Activated CD4-positive, alpha-beta memory T cell treated with anti-CD3 and anti-CD28 coated beads for 36 hours (primary cell): ENCODE measurements at regions of chr12 and their contacts with region 1.

Region 1: DNA sequence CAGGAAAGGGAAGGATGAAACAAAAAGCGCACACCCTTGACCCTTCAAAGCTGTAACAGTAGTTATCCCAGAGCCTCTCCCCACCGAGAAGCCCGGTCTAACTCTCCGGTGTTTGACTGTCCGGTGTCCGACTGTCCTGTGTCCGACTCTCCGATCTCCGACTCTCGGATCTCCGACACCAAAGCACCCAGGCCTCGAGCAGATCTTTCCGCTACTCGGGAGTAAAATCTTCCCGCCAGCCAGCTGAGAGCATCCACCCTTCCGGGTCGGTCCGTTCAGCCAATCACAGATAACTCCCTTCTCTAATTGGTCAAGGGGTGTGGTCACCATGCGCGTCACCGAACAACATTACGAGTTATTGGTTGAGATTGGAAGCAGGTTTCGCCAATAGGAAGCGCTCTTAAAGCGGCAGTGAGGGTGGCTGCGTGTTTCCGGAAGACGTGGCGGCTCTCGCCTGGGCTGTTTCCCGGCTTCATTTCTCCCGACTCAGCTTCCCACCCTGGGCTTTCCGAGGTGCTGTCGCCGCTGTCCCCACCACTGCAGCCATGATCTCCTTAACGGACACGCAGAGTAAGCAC is at the starts of genes GOLT1B and RECQL:
- DNase-seq: peak; percentile 95
- H3K4me3 Mint-ChIP-seq: no peak within 1 kb of the TSS
- H3K27ac Mint-ChIP-seq: no peak within 1 kb of the TSS
- H3K4me1 Mint-ChIP-seq: peaks cover 58% of the 10 kb centered on the region
- H3K27me3 Mint-ChIP-seq: no peaks in the 10 kb centered on the region
- total RNA-seq, gene GOLT1B: 43.6 to 45.2 TPM
- total RNA-seq, gene RECQL: 112 to 114 TPM

Region 2: DNA sequence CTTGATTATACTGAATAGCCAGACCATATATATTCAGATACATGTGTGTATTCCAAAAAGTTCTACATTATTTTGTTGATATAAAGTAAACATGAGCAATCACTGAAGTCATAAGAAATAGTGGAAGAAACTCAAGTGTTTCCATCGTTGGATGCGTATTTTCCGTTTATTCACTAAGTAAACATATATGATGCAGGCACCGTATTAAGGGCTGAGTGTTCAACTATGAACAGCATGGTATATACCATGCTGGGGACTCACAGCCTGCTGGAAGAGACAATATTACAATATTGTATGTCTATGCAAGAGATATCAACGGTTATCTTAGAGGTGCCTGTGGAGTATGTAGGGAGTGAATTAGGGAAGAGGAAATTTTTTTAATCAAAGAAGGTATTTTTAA is 62.8 kb before region 1 on chr12:
- CTCF ChIA-PET with region 1: no interaction called
- POLR2A ChIA-PET with region 1: interaction called, 16 read pairs
- intact Hi-C with region 1: loop called (anchors 1 kb)
- DNase-seq: no peak
- H3K4me3 Mint-ChIP-seq: peak overlapping the region; percentile 93
- H3K27ac Mint-ChIP-seq: peak overlapping the region; percentile 96
- H3K4me1 Mint-ChIP-seq: peaks cover 39% of the 10 kb centered on the region
- H3K27me3 Mint-ChIP-seq: no peaks in the 10 kb centered on the region

Region 3: DNA sequence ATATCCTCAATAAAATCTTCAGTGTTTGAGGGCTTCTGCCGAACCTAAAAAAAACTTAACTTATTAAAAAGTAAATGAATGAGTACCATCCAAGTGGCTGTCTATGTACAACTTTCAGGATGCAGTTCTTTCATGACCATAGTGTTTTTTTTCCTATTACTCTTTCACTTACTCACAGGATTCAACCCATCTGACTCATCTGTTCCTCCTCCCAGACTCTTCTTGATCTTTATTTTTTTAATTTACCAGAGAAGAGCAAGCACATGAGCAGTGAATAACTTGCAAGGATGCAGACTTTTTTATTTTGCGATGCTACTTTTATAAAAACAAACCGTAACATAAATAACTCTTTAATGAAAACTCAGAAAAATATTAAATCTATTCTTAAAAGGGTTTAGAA is 24.5 kb before region 1 on chr12:
- CTCF ChIA-PET with region 1: no interaction called
- POLR2A ChIA-PET with region 1: interaction called, 3 read pairs
- intact Hi-C with region 1: loop called (anchors 1 kb)
- DNase-seq: no peak
- H3K4me3 Mint-ChIP-seq: no peak overlapping the region
- H3K27ac Mint-ChIP-seq: peak overlapping the region; percentile 73
- H3K4me1 Mint-ChIP-seq: peaks cover 14% of the 10 kb centered on the region
- H3K27me3 Mint-ChIP-seq: no peaks in the 10 kb centered on the region

Region 4: DNA sequence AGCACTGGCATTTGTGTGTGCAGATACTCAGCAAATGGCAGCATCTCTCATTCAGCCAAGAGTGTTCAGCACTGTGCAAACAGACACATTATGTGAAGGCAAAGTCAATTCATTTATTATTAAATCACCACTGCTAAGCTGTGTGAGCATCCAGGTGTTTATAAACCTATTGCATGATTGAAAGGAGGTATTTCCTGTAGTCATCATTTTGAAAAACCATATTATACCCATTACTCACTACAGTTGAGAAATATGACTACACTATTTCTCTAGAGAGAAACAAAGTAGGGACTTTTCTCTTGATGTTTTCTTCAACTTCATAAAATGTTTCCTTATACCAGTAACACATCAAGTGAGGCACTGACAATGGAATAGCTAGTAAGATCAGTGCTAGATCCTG is 38.3 kb after region 1 on chr12:
- CTCF ChIA-PET with region 1: no interaction called
- POLR2A ChIA-PET with region 1: no interaction called
- intact Hi-C with region 1: loop called (anchors 1 kb)
- DNase-seq: no peak
- H3K4me3 Mint-ChIP-seq: no peak overlapping the region
- H3K27ac Mint-ChIP-seq: no peak overlapping the region
- H3K4me1 Mint-ChIP-seq: peaks cover 10% of the 10 kb centered on the region
- H3K27me3 Mint-ChIP-seq: peaks cover 2% of the 10 kb centered on the region

Region 5: DNA sequence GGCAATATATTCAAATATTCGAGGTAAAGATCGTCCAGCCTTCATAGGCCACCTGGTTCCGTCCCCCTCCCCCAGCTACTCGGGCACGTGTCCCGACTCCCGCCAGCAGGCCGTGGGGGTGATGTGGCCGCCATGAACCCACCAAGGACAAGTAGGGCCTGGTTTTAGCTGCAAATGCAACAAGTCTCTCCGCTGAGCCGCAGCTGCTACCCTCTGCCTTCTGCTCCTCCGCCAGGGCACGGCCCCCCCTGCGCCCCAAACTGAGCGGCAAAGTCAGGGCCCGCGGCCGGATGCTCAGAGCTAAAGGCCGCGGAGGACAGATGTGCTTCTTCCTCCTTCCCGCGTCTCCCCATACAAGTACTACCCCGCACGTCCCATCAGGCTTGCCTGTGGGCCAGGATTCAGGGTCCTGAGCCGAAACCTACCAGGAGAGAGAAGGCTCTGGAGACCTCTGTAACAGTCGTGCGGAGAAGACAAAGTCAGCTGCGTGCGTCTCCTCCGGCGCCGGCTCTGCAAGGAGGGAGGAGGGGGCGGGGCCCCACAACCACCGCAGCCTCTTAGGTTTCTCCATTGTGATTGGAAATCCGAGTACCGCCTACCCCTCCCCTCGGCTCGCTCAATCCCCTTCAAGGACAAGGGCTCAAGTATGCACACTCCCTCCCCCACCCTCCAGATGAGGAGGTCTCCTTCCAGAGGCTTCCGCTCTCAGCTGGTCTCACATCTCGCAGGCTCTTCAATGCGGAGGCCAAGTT is 156.0 kb after region 1 on chr12 and contains the start of gene LDHB:
- CTCF ChIA-PET with region 1: no interaction called
- POLR2A ChIA-PET with region 1: interaction called, 26 read pairs
- intact Hi-C with region 1: loop called (anchors 2 kb)
- DNase-seq: peak; percentile 98
- H3K4me3 Mint-ChIP-seq: peak within 1 kb of the TSS; percentile 98
- H3K27ac Mint-ChIP-seq: peak within 1 kb of the TSS; percentile 95
- H3K4me1 Mint-ChIP-seq: peaks cover 60% of the 10 kb centered on the region
- H3K27me3 Mint-ChIP-seq: no peaks in the 10 kb centered on the region
- total RNA-seq, gene LDHB: 1,684 to 1,884 TPM

Region 6: DNA sequence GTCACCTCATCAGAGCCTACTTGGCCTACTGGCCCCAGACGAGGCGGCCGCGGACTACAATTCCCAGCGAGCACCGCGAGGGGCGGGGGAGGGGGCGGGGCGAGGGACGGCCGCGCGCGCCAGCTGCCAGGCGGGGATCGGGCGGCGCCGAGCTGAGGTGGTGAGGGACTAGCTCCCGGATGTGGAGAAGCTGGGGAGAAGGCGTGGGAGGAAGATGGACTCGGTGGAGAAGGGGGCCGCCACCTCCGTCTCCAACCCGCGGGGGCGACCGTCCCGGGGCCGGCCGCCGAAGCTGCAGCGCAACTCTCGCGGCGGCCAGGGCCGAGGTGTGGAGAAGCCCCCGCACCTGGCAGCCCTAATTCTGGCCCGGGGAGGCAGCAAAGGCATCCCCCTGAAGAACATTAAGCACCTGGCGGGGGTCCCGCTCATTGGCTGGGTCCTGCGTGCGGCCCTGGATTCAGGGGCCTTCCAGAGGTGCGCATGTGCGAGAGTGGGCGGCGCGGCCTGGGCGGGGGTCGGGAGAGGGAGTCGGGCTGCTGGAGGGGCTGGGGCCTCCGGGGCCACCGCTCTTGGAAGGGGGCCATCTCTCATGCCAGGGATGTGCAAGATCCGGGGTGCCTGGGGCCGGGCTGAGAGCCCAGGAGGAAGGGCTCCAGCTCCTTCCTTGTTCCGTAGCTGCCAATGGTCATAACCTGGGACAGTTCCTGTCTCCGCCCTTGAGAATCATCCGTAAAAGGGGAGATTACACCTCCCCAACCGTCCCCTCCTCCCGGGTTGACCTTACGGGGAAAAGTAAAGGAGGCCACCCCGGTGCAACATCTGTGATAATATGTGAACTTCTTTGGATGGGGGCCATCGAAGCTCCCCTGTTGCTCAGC is 544.9 kb after region 1 on chr12 and contains the start of gene CMAS:
- CTCF ChIA-PET with region 1: no interaction called
- POLR2A ChIA-PET with region 1: interaction called, 3 read pairs
- intact Hi-C with region 1: loop called (anchors 2 kb)
- DNase-seq: peak; percentile 87
- H3K4me3 Mint-ChIP-seq: peak within 1 kb of the TSS; percentile 96
- H3K27ac Mint-ChIP-seq: peak within 1 kb of the TSS; percentile 89
- H3K4me1 Mint-ChIP-seq: peaks cover 51% of the 10 kb centered on the region
- H3K27me3 Mint-ChIP-seq: no peaks in the 10 kb centered on the region
- total RNA-seq, gene CMAS: 51.1 to 51.2 TPM

Region 7: GRCh38 chr12:22624870-22625761 is 1123.6 kb after region 1 on chr12 and contains the start of gene ETNK1:
- CTCF ChIA-PET with region 1: no interaction called
- POLR2A ChIA-PET with region 1: no interaction called
- intact Hi-C with region 1: loop called (anchors 5 kb)
- DNase-seq: peak; percentile 92
- H3K4me3 Mint-ChIP-seq: peak within 1 kb of the TSS; percentile 89
- H3K27ac Mint-ChIP-seq: peak within 1 kb of the TSS; percentile 87
- H3K4me1 Mint-ChIP-seq: peaks cover 35% of the 10 kb centered on the region
- H3K27me3 Mint-ChIP-seq: no peaks in the 10 kb centered on the region
- total RNA-seq, gene ETNK1: 59.0 to 61.0 TPM